Breast epithelium (tissue), 4 donors: ENCODE measurements at regions of chr1 and their contacts with region 1.

Region 1: GRCh38 chr1:2494323-2494693 is 18.2 kb downstream of the PLCH2 start:
- DNase-seq: no peak
- H3K4me3 ChIP-seq: no peak overlapping the region
- H3K27ac ChIP-seq: no peak overlapping the region
- H3K4me1 ChIP-seq: no peaks in the 10 kb centered on the region
- H3K27me3 ChIP-seq: no peaks in the 10 kb centered on the region
- CTCF ChIP-seq: no peak
- POLR2A ChIP-seq: no peak

Region 2: GRCh38 chr1:3000671-3001470 is 506.6 kb after region 1 on chr1:
- intact Hi-C with region 1: loop called (anchors 10 kb)
- DNase-seq: peak in 1 of 2 donors; percentile 41
- H3K4me3 ChIP-seq: no peak overlapping the region
- H3K27ac ChIP-seq: no peak overlapping the region
- H3K4me1 ChIP-seq: no peaks in the 10 kb centered on the region
- H3K27me3 ChIP-seq: peaks cover 0 to 69% of the 10 kb centered on the region in 2 donors
- CTCF ChIP-seq: no peak
- POLR2A ChIP-seq: no peak